Caco-2 (cell line): ENCODE measurements at regions of chr9 and their contacts with region 1.

Region 1: DNA sequence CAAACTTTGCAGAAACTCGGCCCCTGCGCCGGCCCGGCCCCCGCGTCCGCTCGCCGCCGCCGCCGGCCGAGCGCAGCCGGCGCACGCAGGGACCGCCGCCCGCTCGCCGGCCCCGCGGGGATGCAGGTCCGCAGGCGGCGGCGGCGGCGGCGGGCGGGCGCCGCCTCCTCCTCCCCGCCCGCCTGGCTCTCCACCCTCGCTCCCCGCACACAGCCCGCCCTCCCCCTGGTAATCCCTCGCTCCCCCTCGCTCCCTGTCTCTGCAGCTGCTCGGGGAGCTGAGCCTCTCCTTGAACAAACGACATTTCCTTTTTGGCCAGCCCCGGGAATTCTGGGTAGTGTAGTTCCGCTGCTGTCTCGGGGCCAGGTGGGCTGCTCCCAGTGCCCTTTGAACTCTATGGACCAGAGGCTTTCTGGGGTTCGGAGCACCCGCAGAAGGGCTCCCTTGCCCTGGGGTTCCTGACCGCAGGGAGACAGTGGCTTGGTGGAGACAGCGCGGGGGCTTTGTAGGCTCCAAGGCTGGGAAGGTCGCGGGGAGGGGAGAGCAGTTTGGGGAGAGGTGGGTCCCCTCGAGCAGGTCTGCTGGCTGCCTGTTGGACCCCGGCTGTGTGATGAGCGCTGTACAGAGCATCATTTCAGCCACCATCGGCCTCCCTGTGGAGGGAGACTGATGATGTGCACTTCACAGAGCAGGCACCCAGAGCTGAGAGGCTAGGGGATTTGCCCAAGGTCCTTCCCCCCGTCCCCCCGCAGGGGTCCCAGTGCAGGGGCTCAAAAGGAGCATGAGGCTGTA is 1.8 kb upstream of the FAM78A start:
- DNase-seq: peak; percentile 73 to 84
- H3K4me3 ChIP-seq: peak overlapping the region; percentile 54
- H3K4me3 Mint-ChIP-seq: peak overlapping the region; percentile 79
- H3K27ac Mint-ChIP-seq: no peak overlapping the region
- H3K4me1 ChIP-seq: peaks cover 7% of the 10 kb centered on the region
- H3K4me1 Mint-ChIP-seq: peaks cover 7% of the 10 kb centered on the region
- H3K27me3 ChIP-seq: peaks cover 1% of the 10 kb centered on the region
- H3K27me3 Mint-ChIP-seq: peaks cover 14% of the 10 kb centered on the region
- CTCF ChIP-seq: no peak

Region 2: DNA sequence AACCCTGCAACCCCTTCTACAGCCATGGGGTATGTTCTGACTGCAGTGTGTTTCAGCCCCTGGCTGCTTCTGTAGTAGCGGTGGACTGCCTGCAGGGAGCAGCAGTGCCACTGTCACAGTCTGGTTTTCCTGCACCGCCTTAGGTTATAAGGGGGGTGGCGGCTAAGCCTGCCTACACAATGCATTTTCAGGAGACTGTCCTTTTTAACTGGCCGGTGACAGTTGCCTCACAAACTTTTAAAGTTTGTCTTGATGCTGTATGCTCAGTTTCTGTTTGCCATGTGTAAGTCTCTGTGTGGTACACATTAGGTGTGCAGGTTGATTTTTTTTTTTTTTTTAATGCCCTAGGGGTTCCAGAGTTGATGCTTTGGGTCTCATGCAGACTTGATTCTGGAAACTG is 99.7 kb before region 1 on chr9:
- CTCF ChIA-PET with region 1: no interaction called
- POLR2A ChIA-PET with region 1: no interaction called
- intact Hi-C with region 1: loop called (anchors 1 kb)
- DNase-seq: peak; percentile 70 to 79
- H3K4me3 ChIP-seq: no peak overlapping the region
- H3K4me3 Mint-ChIP-seq: no peak overlapping the region
- H3K27ac Mint-ChIP-seq: no peak overlapping the region
- H3K4me1 ChIP-seq: no peaks in the 10 kb centered on the region; the same call in 1 of the 2 replicates
- H3K4me1 Mint-ChIP-seq: peaks cover 6% of the 10 kb centered on the region
- H3K27me3 ChIP-seq: no peaks in the 10 kb centered on the region
- H3K27me3 Mint-ChIP-seq: no peaks in the 10 kb centered on the region
- CTCF ChIP-seq: peak; percentile 85 to 87